T-cell (primary cell): ENCODE measurements at regions of chr15 and their contacts with region 1.

Region 1: GRCh38 chr15:52006702-52007340 is 12.2 kb upstream of the MAPK6 start:
- DNase-seq: no peak
- ATAC-seq: no peak
- H3K4me3 ChIP-seq: no peak overlapping the region
- H3K4me3 Mint-ChIP-seq: no peak overlapping the region
- H3K27ac ChIP-seq: no peak overlapping the region
- H3K27ac Mint-ChIP-seq: no peak overlapping the region
- H3K4me1 ChIP-seq: peaks cover 5 to 12% of the 10 kb centered on the region in 2 experiments
- H3K4me1 Mint-ChIP-seq: peaks cover 13 to 29% (median 24%) of the 10 kb centered on the region in 3 donors
- H3K27me3 ChIP-seq: no peaks in the 10 kb centered on the region
- H3K27me3 Mint-ChIP-seq: no peaks in the 10 kb centered on the region

Region 2: DNA sequence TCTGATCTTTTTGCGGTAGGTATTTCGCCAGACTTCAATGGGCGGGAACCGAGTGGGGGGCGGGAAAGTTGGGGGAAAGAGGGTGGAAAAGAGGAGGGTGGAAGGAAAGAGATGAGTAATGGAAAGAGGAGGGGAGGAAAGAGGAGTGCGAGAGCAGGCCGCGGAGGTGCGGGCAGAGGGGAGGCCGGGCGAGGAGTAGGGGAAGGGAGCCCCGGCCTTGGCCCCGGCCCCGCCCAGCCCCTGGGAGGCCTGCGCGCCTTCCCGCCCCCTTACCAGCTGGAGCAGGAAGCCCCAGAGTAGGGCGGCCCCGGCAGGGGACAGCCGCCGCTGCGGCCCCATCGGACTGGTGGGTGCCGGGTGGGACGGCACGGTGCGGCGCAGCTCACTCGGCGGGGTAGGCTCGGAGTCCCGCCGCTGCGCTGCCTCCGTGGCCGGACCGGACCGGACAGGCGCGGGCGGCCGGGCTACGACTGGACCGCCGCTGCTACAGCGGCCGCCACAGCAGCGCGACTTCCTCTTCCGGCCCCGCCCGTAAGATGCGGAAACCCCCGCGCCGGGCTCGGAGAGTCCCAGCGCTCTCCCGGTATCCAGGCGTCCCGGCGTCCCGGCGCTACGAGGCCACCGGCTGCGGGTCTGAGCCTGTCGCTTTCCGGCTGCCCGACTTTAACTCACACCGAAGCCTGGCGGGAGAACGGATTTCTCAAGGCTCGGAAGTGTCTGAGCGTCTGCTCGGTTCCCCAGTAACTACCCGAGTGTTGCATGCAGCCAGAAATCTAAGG is 1241.4 kb before region 1 on chr15 and contains the start of gene SPPL2A:
- CTCF ChIA-PET with region 1: no interaction called
- POLR2A ChIA-PET with region 1: no interaction called
- DNase-seq: peak; percentile 38 to 85 (median 65)
- ATAC-seq: peak; percentile 88 to 96 (median 93)
- H3K4me3 ChIP-seq: peak within 1 kb of the TSS; percentile 80 to 90
- H3K4me3 Mint-ChIP-seq: peak within 1 kb of the TSS; percentile 90 to 94 (median 91)
- H3K27ac ChIP-seq: peak within 1 kb of the TSS; percentile 96
- H3K27ac Mint-ChIP-seq: peak within 1 kb of the TSS; percentile 91 to 95
- H3K4me1 ChIP-seq: peaks cover 16 to 18% of the 10 kb centered on the region in 2 experiments
- H3K4me1 Mint-ChIP-seq: peaks cover 42 to 55% (median 52%) of the 10 kb centered on the region in 3 donors
- H3K27me3 ChIP-seq: no peaks in the 10 kb centered on the region
- H3K27me3 Mint-ChIP-seq: no peaks in the 10 kb centered on the region
- total RNA-seq, gene SPPL2A: 32.2 to 56.9 (median 48.8) TPM

Region 3: GRCh38 chr15:51576911-51577500 is 429.8 kb before region 1 on chr15:
- CTCF ChIA-PET with region 1: no interaction called
- POLR2A ChIA-PET with region 1: no interaction called
- DNase-seq: no peak
- ATAC-seq: no peak
- H3K4me3 ChIP-seq: no peak overlapping the region
- H3K4me3 Mint-ChIP-seq: no peak overlapping the region
- H3K27ac ChIP-seq: no peak overlapping the region
- H3K27ac Mint-ChIP-seq: no peak overlapping the region
- H3K4me1 ChIP-seq: no peaks in the 10 kb centered on the region
- H3K4me1 Mint-ChIP-seq: no peaks in the 10 kb centered on the region
- H3K27me3 ChIP-seq: no peaks in the 10 kb centered on the region
- H3K27me3 Mint-ChIP-seq: no peaks in the 10 kb centered on the region

Region 4: GRCh38 chr15:52039925-52040781 is 33.3 kb after region 1 on chr15:
- CTCF ChIA-PET with region 1: interaction called, 4 to 7 read pairs
- POLR2A ChIA-PET with region 1: interaction called, 3 to 12 read pairs
- DNase-seq: no peak
- ATAC-seq: no peak
- H3K4me3 ChIP-seq: no peak overlapping the region
- H3K4me3 Mint-ChIP-seq: peak overlapping the region in 1 of 3 donors; percentile 6
- H3K27ac ChIP-seq: peak overlapping the region; percentile 36
- H3K27ac Mint-ChIP-seq: peak overlapping the region; percentile 25 to 79
- H3K4me1 ChIP-seq: peaks cover 6 to 13% of the 10 kb centered on the region in 2 experiments
- H3K4me1 Mint-ChIP-seq: peaks cover 64 to 70% (median 70%) of the 10 kb centered on the region in 3 donors
- H3K27me3 ChIP-seq: no peaks in the 10 kb centered on the region
- H3K27me3 Mint-ChIP-seq: no peaks in the 10 kb centered on the region

Region 5: GRCh38 chr15:52171386-52171785 is 164.6 kb after region 1 on chr15:
- CTCF ChIA-PET with region 1: interaction called in 1 of 2 experiments, 5 read pairs
- POLR2A ChIA-PET with region 1: interaction called in 1 of 2 experiments, 13 read pairs
- DNase-seq: peak in 4 of 35 experiments; percentile 9 to 46 (median 16)
- ATAC-seq: peak; percentile 78 to 89 (median 84)
- H3K4me3 ChIP-seq: no peak overlapping the region
- H3K4me3 Mint-ChIP-seq: peak overlapping the region in 1 of 3 donors; percentile 29
- H3K27ac ChIP-seq: no peak overlapping the region
- H3K27ac Mint-ChIP-seq: peak overlapping the region; percentile 49 to 63
- H3K4me1 ChIP-seq: peaks cover 5 to 9% of the 10 kb centered on the region in 2 experiments
- H3K4me1 Mint-ChIP-seq: peaks cover 60 to 73% (median 62%) of the 10 kb centered on the region in 3 donors
- H3K27me3 ChIP-seq: no peaks in the 10 kb centered on the region
- H3K27me3 Mint-ChIP-seq: no peaks in the 10 kb centered on the region